Endothelial cell of umbilical vein (primary cell): ENCODE measurements at regions of chr2 and their contacts with region 1.

Region 1: DNA sequence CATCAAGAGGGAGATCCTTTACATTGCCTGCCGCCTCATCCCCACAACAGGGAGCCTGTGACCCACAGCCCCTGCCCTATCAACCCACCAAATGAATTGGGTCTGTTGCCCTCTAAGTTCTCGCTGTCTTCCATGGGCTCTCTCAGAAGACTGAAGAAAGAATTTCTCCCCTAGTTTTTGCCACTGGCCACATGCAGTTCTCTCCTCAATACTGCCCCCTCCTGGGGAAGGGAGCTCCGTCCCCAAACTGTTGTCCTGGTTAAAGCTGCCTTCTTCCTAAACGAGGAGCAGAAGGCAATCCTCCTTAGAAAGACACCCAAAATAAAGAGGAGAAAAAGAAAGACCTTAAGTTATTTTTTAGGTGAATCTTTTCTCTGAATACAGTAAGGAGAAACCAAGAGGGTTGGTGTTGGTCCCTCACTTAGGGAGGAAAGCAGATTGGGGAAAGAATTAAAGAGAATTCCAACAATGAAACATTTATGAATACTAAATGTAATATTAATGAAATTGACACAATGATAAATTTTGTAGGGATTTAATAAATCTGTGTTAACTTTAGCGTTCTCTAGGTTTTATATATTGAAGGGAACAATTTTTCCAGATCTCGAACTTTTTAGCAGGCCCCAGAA is 31.1 kb upstream of the SATB2 start:
- DNase-seq: peak; percentile 61
- H3K4me3 ChIP-seq: no peak overlapping the region
- H3K27ac ChIP-seq: no peak overlapping the region
- H3K4me1 ChIP-seq: no peaks in the 10 kb centered on the region
- H3K27me3 ChIP-seq: no peaks in the 10 kb centered on the region
- CTCF ChIP-seq: peak; percentile 79 to 81
- POLR2A ChIP-seq: no peak

Region 2: DNA sequence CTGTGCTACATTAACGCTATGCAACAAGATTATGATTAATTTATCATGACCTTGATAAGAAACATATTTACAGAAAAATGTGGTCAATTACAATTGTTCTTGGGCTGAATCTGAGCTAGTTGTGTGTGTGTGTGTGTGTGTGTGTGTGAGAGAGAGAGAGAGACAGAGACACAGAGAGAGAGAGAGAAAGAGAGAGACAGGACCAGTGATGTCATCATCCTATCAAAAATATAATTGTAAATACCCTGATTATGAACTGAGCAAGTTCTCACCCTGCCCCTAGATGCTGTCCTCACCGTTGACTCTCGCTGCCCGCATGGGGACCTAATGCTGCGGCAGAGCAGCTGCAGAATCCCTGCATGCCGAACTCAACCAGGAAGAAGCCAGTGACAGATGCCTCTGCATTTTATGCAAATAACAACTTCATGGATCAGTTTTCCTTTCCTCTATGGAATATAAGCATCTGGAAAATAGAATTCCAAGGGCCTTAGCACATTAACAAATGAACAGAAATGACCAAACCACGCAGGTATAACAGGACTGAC is 1172.0 kb before region 1 on chr2:
- CTCF ChIA-PET with region 1: interaction called, 317 read pairs
- POLR2A ChIA-PET with region 1: interaction called, 3 read pairs
- dilution Hi-C with region 1: no loop called
- intact Hi-C with region 1: loop called (anchors 1 kb)
- DNase-seq: no peak
- H3K4me3 ChIP-seq: no peak overlapping the region
- H3K27ac ChIP-seq: no peak overlapping the region
- H3K4me1 ChIP-seq: no peaks in the 10 kb centered on the region
- H3K27me3 ChIP-seq: peaks cover 14 to 23% of the 10 kb centered on the region in 2 experiments
- CTCF ChIP-seq: no peak
- POLR2A ChIP-seq: no peak

Region 3: DNA sequence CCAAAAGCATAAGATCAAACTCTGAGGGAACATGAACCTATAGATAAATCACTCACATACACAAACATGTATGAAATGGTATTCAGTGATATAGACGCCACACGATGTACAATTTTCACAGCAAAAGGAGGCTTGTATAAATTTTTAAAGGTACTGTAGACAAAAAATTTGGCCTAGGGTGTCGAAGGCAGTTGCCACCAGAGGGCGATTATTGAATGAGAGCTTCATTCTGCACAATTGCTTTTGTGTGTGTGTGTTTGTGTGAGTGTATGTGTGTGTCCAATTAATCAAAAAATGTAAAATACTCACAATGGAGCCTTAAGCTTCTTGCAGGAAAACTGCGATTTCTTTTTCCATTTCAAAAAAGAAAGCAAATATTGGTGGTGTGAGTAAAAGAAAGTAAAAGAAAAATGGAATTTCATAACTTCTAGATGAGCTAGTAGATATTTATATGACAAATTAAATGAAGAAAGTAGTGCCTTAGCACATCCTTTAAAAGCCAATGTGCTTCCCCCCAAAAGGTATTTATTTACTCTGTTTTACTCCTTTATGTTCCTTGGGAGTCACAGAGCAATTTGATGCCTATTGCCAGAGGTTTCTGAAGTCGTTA is 831.3 kb before region 1 on chr2:
- CTCF ChIA-PET with region 1: interaction called, 7 read pairs
- POLR2A ChIA-PET with region 1: no interaction called
- dilution Hi-C with region 1: no loop called
- intact Hi-C with region 1: loop called (anchors 1 kb)
- DNase-seq: peak; percentile 3
- H3K4me3 ChIP-seq: no peak overlapping the region
- H3K27ac ChIP-seq: no peak overlapping the region
- H3K4me1 ChIP-seq: no peaks in the 10 kb centered on the region
- H3K27me3 ChIP-seq: no peaks in the 10 kb centered on the region
- CTCF ChIP-seq: no peak
- POLR2A ChIP-seq: no peak

Region 4: GRCh38 chr2:199228887-199229819 is 259.7 kb before region 1 on chr2:
- CTCF ChIA-PET with region 1: no interaction called
- POLR2A ChIA-PET with region 1: no interaction called
- dilution Hi-C with region 1: no loop called
- intact Hi-C with region 1: no loop called
- DNase-seq: no peak
- H3K4me3 ChIP-seq: no peak overlapping the region
- H3K27ac ChIP-seq: no peak overlapping the region
- H3K4me1 ChIP-seq: no peaks in the 10 kb centered on the region
- H3K27me3 ChIP-seq: no peaks in the 10 kb centered on the region
- CTCF ChIP-seq: no peak
- POLR2A ChIP-seq: no peak

Region 5: DNA sequence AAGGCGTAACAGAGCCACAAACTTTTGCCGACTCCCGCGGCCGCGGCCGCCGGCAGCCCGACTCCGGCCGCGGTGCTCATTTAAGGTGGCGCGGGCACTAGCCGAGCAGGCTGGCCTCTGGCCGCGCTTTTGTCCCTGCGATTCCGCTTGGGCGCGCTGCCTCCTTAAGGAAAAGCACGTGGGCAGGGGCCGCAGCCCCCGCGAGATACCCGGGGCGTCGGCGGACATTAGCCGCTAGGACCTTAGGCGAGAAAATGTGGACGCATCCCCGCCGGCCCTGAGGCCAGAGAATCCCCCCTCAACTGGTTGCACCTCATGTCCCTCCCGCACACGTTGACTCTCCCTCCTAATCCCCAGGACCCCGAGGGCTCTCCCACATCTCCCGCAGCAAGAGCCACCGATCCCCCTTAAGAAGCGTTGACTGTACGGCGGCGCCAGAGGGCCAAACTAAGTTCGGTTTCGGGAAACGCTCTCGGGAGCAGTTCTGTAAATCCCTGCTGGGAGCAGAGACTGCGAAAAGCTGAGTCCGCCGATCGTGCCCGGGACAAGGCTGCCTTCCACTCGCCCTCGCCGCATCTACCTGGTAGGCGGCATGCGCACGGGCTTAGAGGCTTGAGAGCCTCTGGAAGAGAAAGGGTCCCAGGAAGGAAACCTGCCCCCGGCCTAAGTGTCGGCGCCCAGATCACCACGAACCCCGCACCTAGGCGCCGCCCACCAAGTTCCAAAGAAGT is 29.4 kb before region 1 on chr2:
- CTCF ChIA-PET with region 1: interaction called, 10 read pairs
- POLR2A ChIA-PET with region 1: no interaction called
- dilution Hi-C with region 1: no loop called
- intact Hi-C with region 1: no loop called
- DNase-seq: peak; percentile 93
- H3K4me3 ChIP-seq: peak overlapping the region; percentile 28 to 84 (median 57)
- H3K27ac ChIP-seq: no peak overlapping the region
- H3K4me1 ChIP-seq: peaks cover 14% of the 10 kb centered on the region
- H3K27me3 ChIP-seq: peaks cover 58 to 82% of the 10 kb centered on the region in 2 experiments
- CTCF ChIP-seq: no peak
- POLR2A ChIP-seq: peak; percentile 14

Region 6: DNA sequence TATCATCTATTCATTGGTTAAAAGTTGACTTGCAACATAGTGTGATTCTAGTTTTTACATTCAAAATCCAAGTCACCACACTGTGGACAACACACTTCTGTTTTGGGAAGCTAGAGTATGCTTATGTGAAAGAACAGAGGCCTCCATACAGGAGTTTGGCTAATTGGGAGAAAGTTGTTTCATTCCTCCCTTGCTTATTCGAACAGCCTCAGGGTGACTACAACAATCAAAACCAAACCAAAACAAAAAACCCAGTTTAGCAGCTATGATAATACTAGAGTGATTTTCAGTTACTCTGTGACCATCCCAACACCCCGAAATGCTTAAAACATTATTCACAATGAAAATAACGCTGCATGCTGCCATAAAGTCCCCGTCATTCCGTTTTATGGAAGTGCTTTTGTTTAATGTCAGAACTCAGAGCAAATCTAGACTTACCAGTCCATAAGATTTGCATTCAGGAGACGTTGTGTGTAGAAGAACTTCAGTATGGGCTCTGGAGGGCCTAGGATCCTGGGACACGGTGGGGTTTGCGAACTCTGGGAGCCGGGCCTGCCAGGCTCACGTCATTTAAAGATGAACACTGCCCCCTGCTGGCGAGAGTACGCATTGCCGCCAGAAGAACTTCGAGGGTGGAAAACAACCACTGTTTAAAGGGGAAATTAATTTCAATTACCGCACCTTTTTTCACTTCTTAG is 250.7 kb after region 1 on chr2:
- CTCF ChIA-PET with region 1: interaction called, 6 read pairs
- POLR2A ChIA-PET with region 1: no interaction called
- dilution Hi-C with region 1: no loop called
- intact Hi-C with region 1: loop called (anchors 5 kb)
- DNase-seq: peak; percentile 51
- H3K4me3 ChIP-seq: no peak overlapping the region
- H3K27ac ChIP-seq: no peak overlapping the region
- H3K4me1 ChIP-seq: no peaks in the 10 kb centered on the region
- H3K27me3 ChIP-seq: peaks cover 5 to 7% of the 10 kb centered on the region in 2 experiments
- CTCF ChIP-seq: peak; percentile 80 to 83
- POLR2A ChIP-seq: no peak